Activated B cell treated with CpG ODN at 0.5 μM for 24 hours (primary cell): ENCODE measurements at regions of chr21 and their contacts with region 1.

Region 1: DNA sequence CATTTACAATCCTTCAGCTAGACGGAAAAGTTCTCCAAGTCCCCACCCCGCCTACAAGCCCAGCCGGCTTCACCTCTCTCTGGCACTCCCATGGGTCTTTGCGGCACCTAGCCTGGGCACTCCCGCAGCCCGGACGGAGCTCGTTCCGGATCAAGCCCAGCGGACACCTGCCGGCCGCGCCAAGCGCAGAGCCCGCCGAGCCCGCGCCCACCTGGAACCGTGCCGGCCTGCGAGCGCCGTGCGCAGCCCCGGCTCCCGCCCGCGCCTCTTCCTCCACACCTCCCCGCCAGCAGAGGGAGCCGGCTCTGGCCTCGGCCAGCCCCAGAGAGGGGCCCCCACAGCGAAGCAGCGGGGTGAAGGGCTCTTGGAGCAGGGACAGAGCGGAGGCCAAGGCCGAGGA is 50.0 kb upstream of the KRTAP19-8 start:
- DNase-seq: no peak
- ATAC-seq: no peak
- H3K4me3 Mint-ChIP-seq: no peak overlapping the region
- H3K27ac Mint-ChIP-seq: no peak overlapping the region
- H3K4me1 Mint-ChIP-seq: peaks cover 2% of the 10 kb centered on the region
- H3K27me3 Mint-ChIP-seq: peaks cover under 1% of the 10 kb centered on the region
- CTCF ChIP-seq: no peak

Region 2: GRCh38 chr21:29477941-29478340 is 1610.4 kb before region 1 on chr21:
- CTCF ChIA-PET with region 1: no interaction called
- POLR2A ChIA-PET with region 1: no interaction called
- intact Hi-C with region 1: loop called (anchors 5 kb)
- DNase-seq: no peak
- ATAC-seq: no peak
- H3K4me3 Mint-ChIP-seq: no peak overlapping the region
- H3K27ac Mint-ChIP-seq: no peak overlapping the region
- H3K4me1 Mint-ChIP-seq: peaks cover 9% of the 10 kb centered on the region
- H3K27me3 Mint-ChIP-seq: no peaks in the 10 kb centered on the region
- CTCF ChIP-seq: no peak

Region 3: DNA sequence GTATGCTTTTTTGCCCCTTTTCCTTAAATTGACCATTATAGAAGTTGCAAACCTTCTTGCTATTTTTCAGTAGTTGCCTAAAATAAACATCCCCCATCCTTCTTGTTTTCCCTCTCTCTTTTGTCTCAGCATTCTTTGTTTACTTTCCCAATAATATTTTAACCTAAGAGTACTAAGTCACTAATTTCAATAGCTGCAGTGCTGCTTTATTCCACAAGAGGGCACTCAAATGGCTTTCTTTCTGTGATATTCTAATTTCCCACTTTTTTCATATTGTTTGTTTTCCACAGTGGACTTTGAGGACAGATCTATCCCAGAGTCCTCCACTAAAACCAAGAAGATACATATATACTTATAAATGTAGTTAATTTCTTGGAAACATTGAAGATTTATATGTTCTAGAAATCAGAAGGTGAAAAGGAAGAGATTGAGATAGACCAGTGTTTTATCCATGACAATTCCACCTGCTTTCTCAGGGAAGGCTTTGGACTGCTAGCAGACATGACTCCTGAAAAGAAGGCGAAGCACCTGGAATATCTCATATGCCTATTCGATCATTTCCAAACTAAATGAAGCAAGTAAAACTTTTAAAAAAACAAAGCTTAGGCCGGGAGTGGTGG is 1043.8 kb before region 1 on chr21:
- CTCF ChIA-PET with region 1: interaction called, 11 read pairs
- POLR2A ChIA-PET with region 1: no interaction called
- intact Hi-C with region 1: loop called (anchors 1 kb)
- DNase-seq: no peak
- ATAC-seq: no peak
- H3K4me3 Mint-ChIP-seq: no peak overlapping the region
- H3K27ac Mint-ChIP-seq: no peak overlapping the region
- H3K4me1 Mint-ChIP-seq: no peaks in the 10 kb centered on the region
- H3K27me3 Mint-ChIP-seq: no peaks in the 10 kb centered on the region
- CTCF ChIP-seq: peak; percentile 40

Region 4: GRCh38 chr21:31098576-31099005 is 10.3 kb after region 1 on chr21:
- CTCF ChIA-PET with region 1: interaction called, 11 read pairs
- POLR2A ChIA-PET with region 1: no interaction called
- intact Hi-C with region 1: no loop called
- DNase-seq: peak; percentile 46
- ATAC-seq: peak; percentile 67
- H3K4me3 Mint-ChIP-seq: no peak overlapping the region
- H3K27ac Mint-ChIP-seq: no peak overlapping the region
- H3K4me1 Mint-ChIP-seq: peaks cover 12% of the 10 kb centered on the region
- H3K27me3 Mint-ChIP-seq: peaks cover 10% of the 10 kb centered on the region
- CTCF ChIP-seq: no peak